Mammary epithelial cell (primary cell): ENCODE measurements at regions of chr6 and their contacts with region 1.

Region 1: GRCh38 chr6:105087571-105088211 is 92.1 kb downstream of the POPDC3 start:
- DNase-seq: peak; percentile 35
- H3K4me3 ChIP-seq: no peak overlapping the region
- H3K27ac ChIP-seq: no peak overlapping the region
- H3K4me1 ChIP-seq: no peaks in the 10 kb centered on the region
- H3K27me3 ChIP-seq: no peaks in the 10 kb centered on the region
- CTCF ChIP-seq: peak; percentile 76 to 81

Region 2: DNA sequence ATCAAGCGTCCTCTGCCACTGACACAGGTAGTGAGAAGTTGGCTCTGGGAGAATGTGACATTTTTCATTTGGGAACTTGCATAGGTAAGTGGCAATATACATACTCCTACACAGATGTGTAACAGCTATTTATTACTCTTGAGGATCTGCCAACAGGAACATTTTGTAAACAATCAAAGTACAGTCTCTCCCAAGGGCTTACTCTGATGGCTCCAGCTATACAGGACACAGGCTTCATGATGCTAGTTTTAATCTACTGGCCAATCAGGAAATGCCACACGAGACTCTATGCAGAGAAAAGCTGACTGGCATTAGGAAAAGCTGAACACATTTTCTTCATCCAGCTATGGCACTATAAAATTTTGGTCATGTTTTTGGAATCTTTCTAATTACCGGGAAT is 34.3 kb after region 1 on chr6:
- CTCF ChIA-PET with region 1: no interaction called
- dilution Hi-C with region 1: no loop called
- in situ Hi-C with region 1: no loop called
- intact Hi-C with region 1: no loop called
- DNase-seq: no peak
- H3K4me3 ChIP-seq: no peak overlapping the region
- H3K27ac ChIP-seq: no peak overlapping the region
- H3K4me1 ChIP-seq: no peaks in the 10 kb centered on the region
- H3K27me3 ChIP-seq: no peaks in the 10 kb centered on the region
- CTCF ChIP-seq: no peak

Region 3: DNA sequence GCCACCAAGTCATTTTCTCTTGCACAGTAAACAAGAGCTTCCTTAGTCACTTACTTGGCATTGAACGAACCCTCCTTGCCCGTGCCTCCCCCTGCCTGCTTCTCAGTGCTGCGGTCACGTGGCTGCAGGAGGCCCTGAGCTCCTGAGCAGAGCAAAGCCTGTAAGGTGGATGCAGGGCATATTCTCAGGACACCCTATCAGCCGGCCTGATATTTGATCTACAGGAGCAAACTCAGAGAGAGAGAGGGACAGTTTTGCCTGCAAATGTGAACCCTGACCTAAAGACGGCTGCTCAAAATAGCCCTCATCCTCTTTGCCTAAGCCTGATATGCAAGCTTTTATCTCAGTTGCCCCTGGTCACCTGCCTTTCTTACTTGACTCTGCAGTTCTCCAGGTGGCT is 185.1 kb after region 1 on chr6:
- CTCF ChIA-PET with region 1: no interaction called
- dilution Hi-C with region 1: no loop called
- in situ Hi-C with region 1: no loop called
- intact Hi-C with region 1: loop called (anchors 1 kb)
- DNase-seq: no peak
- H3K4me3 ChIP-seq: no peak overlapping the region
- H3K27ac ChIP-seq: no peak overlapping the region
- H3K4me1 ChIP-seq: no peaks in the 10 kb centered on the region
- H3K27me3 ChIP-seq: no peaks in the 10 kb centered on the region
- CTCF ChIP-seq: no peak

Region 4: GRCh38 chr6:105363100-105363754 is 275.5 kb after region 1 on chr6:
- CTCF ChIA-PET with region 1: no interaction called
- dilution Hi-C with region 1: no loop called
- in situ Hi-C with region 1: no loop called
- intact Hi-C with region 1: loop called (anchors 1 kb)
- DNase-seq: peak; percentile 33
- H3K4me3 ChIP-seq: no peak overlapping the region
- H3K27ac ChIP-seq: peak overlapping the region; percentile 94
- H3K4me1 ChIP-seq: peaks cover 58% of the 10 kb centered on the region
- H3K27me3 ChIP-seq: no peaks in the 10 kb centered on the region
- CTCF ChIP-seq: peak; percentile 32 to 49

Region 5: DNA sequence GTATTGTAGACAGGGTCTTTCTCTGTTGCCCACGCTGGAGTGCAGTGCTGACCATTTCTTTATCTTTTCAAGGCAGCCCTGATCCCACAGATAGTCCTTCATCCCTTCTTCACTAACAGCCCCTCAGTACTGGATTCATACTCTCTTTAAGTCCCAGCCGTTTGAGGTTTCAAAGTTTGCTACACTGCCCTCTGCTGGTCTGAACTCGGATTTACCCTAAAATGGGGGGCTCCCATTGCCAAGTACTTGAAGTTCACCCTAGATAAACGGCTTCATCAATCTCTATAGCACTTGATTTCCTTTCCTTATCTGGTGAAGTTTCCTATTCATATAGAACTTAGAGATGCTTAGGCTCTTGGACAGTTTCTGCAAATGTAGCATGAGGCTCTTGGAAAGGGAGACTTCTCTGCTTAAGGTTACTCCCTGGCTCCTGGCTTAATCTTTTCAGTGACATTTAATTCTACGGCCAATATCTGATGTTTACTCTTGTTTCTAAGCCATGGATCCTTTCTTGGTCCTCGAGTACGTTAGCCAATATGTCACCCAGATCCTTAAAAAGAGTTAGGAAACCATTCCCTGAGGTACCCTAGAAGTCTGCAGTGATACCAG is 336.6 kb after region 1 on chr6:
- CTCF ChIA-PET with region 1: interaction called, 3 read pairs
- dilution Hi-C with region 1: no loop called
- in situ Hi-C with region 1: loop called in 1 of 2 experiments (anchors 5 kb)
- intact Hi-C with region 1: loop called (anchors 1 kb)
- DNase-seq: peak; percentile 31
- H3K4me3 ChIP-seq: no peak overlapping the region
- H3K27ac ChIP-seq: no peak overlapping the region
- H3K4me1 ChIP-seq: peaks cover 16% of the 10 kb centered on the region
- H3K27me3 ChIP-seq: no peaks in the 10 kb centered on the region
- CTCF ChIP-seq: peak; percentile 52 to 75